Caco-2 (cell line): ENCODE measurements at regions of chr1 and their contacts with region 1.

Region 1: GRCh38 chr1:94801919-94802546 is 18.1 kb upstream of the SLC44A3 start:
- DNase-seq: peak in 1 of 2 experiments; percentile 38
- H3K4me3 ChIP-seq: no peak overlapping the region
- H3K4me3 Mint-ChIP-seq: no peak overlapping the region
- H3K27ac Mint-ChIP-seq: peak overlapping the region; percentile 50
- H3K4me1 ChIP-seq: peaks cover 27% of the 10 kb centered on the region
- H3K4me1 Mint-ChIP-seq: peaks cover 36% of the 10 kb centered on the region
- H3K27me3 ChIP-seq: no peaks in the 10 kb centered on the region
- H3K27me3 Mint-ChIP-seq: no peaks in the 10 kb centered on the region
- CTCF ChIP-seq: peak in 1 of 2 experiments; percentile 16

Region 2: GRCh38 chr1:94481473-94481933 is 320.5 kb before region 1 on chr1:
- CTCF ChIA-PET with region 1: no interaction called
- POLR2A ChIA-PET with region 1: no interaction called
- intact Hi-C with region 1: loop called (anchors 1 kb)
- DNase-seq: peak; percentile 48 to 52
- H3K4me3 ChIP-seq: no peak overlapping the region
- H3K4me3 Mint-ChIP-seq: no peak overlapping the region
- H3K27ac Mint-ChIP-seq: no peak overlapping the region
- H3K4me1 ChIP-seq: no peaks in the 10 kb centered on the region; the same call in 1 of the 2 replicates
- H3K4me1 Mint-ChIP-seq: peaks cover under 1% of the 10 kb centered on the region
- H3K27me3 ChIP-seq: no peaks in the 10 kb centered on the region
- H3K27me3 Mint-ChIP-seq: no peaks in the 10 kb centered on the region
- CTCF ChIP-seq: peak; percentile 54 to 59

Region 3: GRCh38 chr1:94522304-94522703 is 279.7 kb before region 1 on chr1:
- CTCF ChIA-PET with region 1: interaction called, 9 read pairs
- POLR2A ChIA-PET with region 1: no interaction called
- intact Hi-C with region 1: loop called (anchors 1 kb)
- DNase-seq: no peak
- H3K4me3 ChIP-seq: no peak overlapping the region
- H3K4me3 Mint-ChIP-seq: no peak overlapping the region
- H3K27ac Mint-ChIP-seq: no peak overlapping the region
- H3K4me1 ChIP-seq: peaks cover 18% of the 10 kb centered on the region
- H3K4me1 Mint-ChIP-seq: peaks cover 23% of the 10 kb centered on the region
- H3K27me3 ChIP-seq: no peaks in the 10 kb centered on the region
- H3K27me3 Mint-ChIP-seq: no peaks in the 10 kb centered on the region
- CTCF ChIP-seq: peak in 1 of 2 experiments; percentile 22

Region 4: GRCh38 chr1:94599095-94599813 is 202.8 kb before region 1 on chr1:
- CTCF ChIA-PET with region 1: no interaction called
- POLR2A ChIA-PET with region 1: no interaction called
- intact Hi-C with region 1: loop called (anchors 2 kb)
- DNase-seq: peak in 1 of 2 experiments; percentile 45
- H3K4me3 ChIP-seq: no peak overlapping the region
- H3K4me3 Mint-ChIP-seq: no peak overlapping the region
- H3K27ac Mint-ChIP-seq: no peak overlapping the region
- H3K4me1 ChIP-seq: peaks cover 43% of the 10 kb centered on the region
- H3K4me1 Mint-ChIP-seq: peaks cover 34% of the 10 kb centered on the region
- H3K27me3 ChIP-seq: no peaks in the 10 kb centered on the region
- H3K27me3 Mint-ChIP-seq: no peaks in the 10 kb centered on the region
- CTCF ChIP-seq: peak in 1 of 2 experiments; percentile 43

Region 5: DNA sequence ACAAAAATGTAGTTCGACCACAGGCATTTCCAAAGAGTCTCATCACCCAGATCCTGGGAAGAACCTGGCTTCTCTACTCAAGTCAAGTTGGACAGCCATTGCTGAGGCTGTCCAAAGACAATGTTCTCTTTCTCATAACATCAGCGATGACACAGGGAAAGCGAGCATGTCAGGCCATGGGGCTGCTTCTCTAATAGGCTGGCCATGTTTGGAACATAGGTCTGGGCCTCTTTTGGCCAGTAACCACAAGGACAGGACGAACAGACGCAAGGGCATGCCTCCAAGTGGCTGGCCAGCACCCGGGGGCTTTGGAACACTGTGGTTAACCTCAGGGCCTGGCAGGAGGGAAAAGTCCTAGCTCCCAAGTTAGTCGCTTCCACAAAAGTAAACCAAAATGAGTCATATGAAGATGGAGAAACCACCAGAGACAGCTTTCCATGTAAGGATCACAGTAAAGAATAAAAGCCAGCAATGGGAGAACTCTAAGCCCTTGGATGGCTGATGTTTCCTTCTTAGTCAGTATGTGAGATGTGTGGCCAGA is 62.4 kb before region 1 on chr1:
- CTCF ChIA-PET with region 1: no interaction called
- POLR2A ChIA-PET with region 1: no interaction called
- intact Hi-C with region 1: loop called (anchors 5 kb)
- DNase-seq: no peak
- H3K4me3 ChIP-seq: no peak overlapping the region
- H3K4me3 Mint-ChIP-seq: no peak overlapping the region
- H3K27ac Mint-ChIP-seq: no peak overlapping the region
- H3K4me1 ChIP-seq: peaks cover 6% of the 10 kb centered on the region; the same call in 1 of the 2 replicates
- H3K4me1 Mint-ChIP-seq: peaks cover 14% of the 10 kb centered on the region
- H3K27me3 ChIP-seq: no peaks in the 10 kb centered on the region
- H3K27me3 Mint-ChIP-seq: no peaks in the 10 kb centered on the region
- CTCF ChIP-seq: no peak

Region 6: GRCh38 chr1:94757931-94758330 is 44.1 kb before region 1 on chr1:
- CTCF ChIA-PET with region 1: no interaction called
- POLR2A ChIA-PET with region 1: no interaction called
- intact Hi-C with region 1: no loop called
- DNase-seq: no peak
- H3K4me3 ChIP-seq: no peak overlapping the region
- H3K4me3 Mint-ChIP-seq: no peak overlapping the region
- H3K27ac Mint-ChIP-seq: no peak overlapping the region
- H3K4me1 ChIP-seq: no peaks in the 10 kb centered on the region
- H3K4me1 Mint-ChIP-seq: peaks cover 7% of the 10 kb centered on the region
- H3K27me3 ChIP-seq: no peaks in the 10 kb centered on the region
- H3K27me3 Mint-ChIP-seq: no peaks in the 10 kb centered on the region
- CTCF ChIP-seq: no peak

Region 7: DNA sequence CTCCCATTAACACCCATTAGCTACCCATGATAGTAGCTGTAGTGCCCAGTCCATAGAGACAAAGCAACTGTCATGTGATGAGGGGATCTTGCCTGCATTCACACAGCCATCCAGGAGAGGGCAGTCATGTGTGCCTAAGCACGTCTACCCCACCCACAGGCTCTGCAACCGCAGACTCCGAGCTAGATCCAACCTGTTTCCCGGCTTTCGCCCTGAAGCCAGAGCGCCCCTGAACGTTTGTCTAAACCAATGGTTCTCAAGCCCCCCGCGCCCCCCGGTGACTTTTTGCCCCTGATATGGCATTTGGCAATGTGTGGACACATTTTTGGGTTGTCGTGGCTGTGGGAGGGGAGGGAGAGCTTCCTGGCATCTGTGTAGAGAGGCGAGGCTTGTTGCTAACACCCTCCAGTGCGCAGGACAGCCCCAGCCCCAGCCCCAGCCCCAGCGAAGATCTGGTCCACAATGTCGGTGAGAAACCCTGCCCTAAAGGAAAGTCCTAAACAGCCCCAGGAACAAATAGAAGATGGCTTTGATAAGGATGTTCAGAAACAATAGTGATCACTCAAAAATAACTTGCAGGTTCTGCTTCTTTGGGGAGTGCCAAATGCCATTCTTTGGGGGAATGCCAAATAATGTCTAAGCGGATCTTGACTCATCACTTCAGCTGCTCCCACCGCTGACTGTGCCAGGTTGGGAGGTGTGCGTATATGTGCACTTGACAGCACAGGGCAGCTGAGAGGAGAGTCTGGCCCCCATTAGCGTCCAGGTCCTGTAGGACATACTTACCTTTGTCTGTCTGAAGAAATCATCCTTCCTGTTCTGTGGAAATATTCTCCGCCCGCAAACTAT is 52.6 kb after region 1 on chr1:
- CTCF ChIA-PET with region 1: no interaction called
- POLR2A ChIA-PET with region 1: no interaction called
- intact Hi-C with region 1: no loop called
- DNase-seq: peak; percentile 72 to 78
- H3K4me3 ChIP-seq: no peak overlapping the region
- H3K4me3 Mint-ChIP-seq: no peak overlapping the region
- H3K27ac Mint-ChIP-seq: no peak overlapping the region
- H3K4me1 ChIP-seq: peaks cover 9% of the 10 kb centered on the region
- H3K4me1 Mint-ChIP-seq: no peaks in the 10 kb centered on the region
- H3K27me3 ChIP-seq: no peaks in the 10 kb centered on the region
- H3K27me3 Mint-ChIP-seq: no peaks in the 10 kb centered on the region
- CTCF ChIP-seq: peak; percentile 55 to 71